Ascending aorta (tissue), 2 donors: ENCODE measurements at regions of chr11 and their contacts with region 1.

Region 1: GRCh38 chr11:124673333-124674167 is at the starts of genes SIAE and SPA17:
- DNase-seq: peak; percentile 79 to 97
- H3K4me3 ChIP-seq: peak within 1 kb of the TSS; percentile 65 to 87
- H3K27ac ChIP-seq: peak within 1 kb of the TSS; percentile 85 to 86
- H3K4me1 ChIP-seq: peaks cover 4 to 25% of the 10 kb centered on the region in 2 donors
- H3K27me3 ChIP-seq: no peaks in the 10 kb centered on the region
- CTCF ChIP-seq: no peak
- total RNA-seq, gene SIAE: 4.8 TPM
- total RNA-seq, gene SPA17: not detected

Region 2: GRCh38 chr11:124518989-124519451 is 154.5 kb before region 1 on chr11:
- intact Hi-C with region 1: no loop called
- DNase-seq: no peak
- H3K4me3 ChIP-seq: no peak overlapping the region
- H3K27ac ChIP-seq: no peak overlapping the region
- H3K4me1 ChIP-seq: no peaks in the 10 kb centered on the region
- H3K27me3 ChIP-seq: no peaks in the 10 kb centered on the region
- CTCF ChIP-seq: no peak

Region 3: GRCh38 chr11:124622531-124623451 is 50.8 kb before region 1 on chr11 and contains the start of gene TBRG1:
- intact Hi-C with region 1: loop called (anchors 2 kb)
- DNase-seq: peak; percentile 41 to 95
- H3K4me3 ChIP-seq: peak within 1 kb of the TSS; percentile 82 to 94
- H3K27ac ChIP-seq: peak within 1 kb of the TSS; percentile 92 to 98
- H3K4me1 ChIP-seq: peaks cover 0 to 3% of the 10 kb centered on the region in 2 donors
- H3K27me3 ChIP-seq: no peaks in the 10 kb centered on the region
- CTCF ChIP-seq: no peak
- total RNA-seq, gene TBRG1: 21.2 TPM

Region 4: GRCh38 chr11:124717786-124718651 is 44.5 kb after region 1 on chr11:
- intact Hi-C with region 1: loop called (anchors 5 kb)
- DNase-seq: no peak
- H3K4me3 ChIP-seq: peak overlapping the region; percentile 48 to 64
- H3K27ac ChIP-seq: peak overlapping the region; percentile 51 to 65
- H3K4me1 ChIP-seq: peaks cover 0 to 8% of the 10 kb centered on the region in 2 donors
- H3K27me3 ChIP-seq: no peaks in the 10 kb centered on the region
- CTCF ChIP-seq: no peak

Region 5: DNA sequence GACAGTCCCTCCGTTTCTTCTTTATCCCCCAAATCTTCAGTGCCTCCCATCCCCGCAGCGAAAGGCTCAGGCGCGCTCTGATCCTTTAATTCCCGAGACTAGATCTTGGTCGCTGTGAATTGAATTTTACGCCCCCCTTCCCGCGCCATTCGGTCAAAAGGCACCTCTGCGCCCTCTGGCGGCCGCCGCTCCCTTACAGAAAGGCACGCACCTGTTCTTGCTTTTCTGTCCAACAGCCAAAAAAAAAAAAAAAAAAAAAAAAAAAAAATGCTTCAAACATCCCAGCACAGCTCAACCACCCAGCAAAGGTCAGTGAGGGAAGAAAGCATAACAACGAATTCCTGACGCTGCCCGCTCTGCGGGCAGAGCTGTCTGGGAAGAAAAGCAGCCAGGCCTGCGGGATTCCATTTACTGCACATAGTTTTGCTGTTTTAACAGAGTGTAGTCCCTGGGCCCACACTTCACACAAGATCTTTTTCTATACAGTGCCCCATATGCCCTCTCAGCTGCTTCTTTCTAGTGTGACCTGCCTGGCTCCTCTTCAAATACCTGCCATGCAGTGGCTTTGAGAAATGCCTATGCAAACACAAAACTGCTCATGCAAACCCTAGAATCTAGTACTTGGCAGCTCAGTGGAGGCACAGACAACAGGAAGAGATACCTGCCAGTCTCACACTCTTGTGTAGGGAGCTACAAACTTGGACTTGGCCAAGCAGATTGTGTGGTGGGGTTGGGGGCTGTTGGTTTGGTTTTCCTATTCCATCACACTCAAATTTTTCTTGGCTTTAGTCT is 89.8 kb after region 1 on chr11:
- intact Hi-C with region 1: loop called (anchors 1 kb)
- DNase-seq: peak in 1 of 2 donors; percentile 92
- H3K4me3 ChIP-seq: peak overlapping the region; percentile 62 to 67
- H3K27ac ChIP-seq: peak overlapping the region; percentile 79 to 85
- H3K4me1 ChIP-seq: peaks cover 3 to 21% of the 10 kb centered on the region in 2 donors
- H3K27me3 ChIP-seq: no peaks in the 10 kb centered on the region
- CTCF ChIP-seq: peak; percentile 26 to 75 (median 68)

Region 6: GRCh38 chr11:124837491-124837856 is 163.9 kb after region 1 on chr11:
- intact Hi-C with region 1: loop called (anchors 1 kb)
- DNase-seq: no peak
- H3K4me3 ChIP-seq: no peak overlapping the region
- H3K27ac ChIP-seq: peak overlapping the region in 1 of 2 donors; percentile 84
- H3K4me1 ChIP-seq: peaks cover 11 to 14% of the 10 kb centered on the region in 2 donors
- H3K27me3 ChIP-seq: peaks cover 21% of the 10 kb centered on the region
- CTCF ChIP-seq: peak in 2 of 3 experiments; percentile 25 to 35

Region 7: DNA sequence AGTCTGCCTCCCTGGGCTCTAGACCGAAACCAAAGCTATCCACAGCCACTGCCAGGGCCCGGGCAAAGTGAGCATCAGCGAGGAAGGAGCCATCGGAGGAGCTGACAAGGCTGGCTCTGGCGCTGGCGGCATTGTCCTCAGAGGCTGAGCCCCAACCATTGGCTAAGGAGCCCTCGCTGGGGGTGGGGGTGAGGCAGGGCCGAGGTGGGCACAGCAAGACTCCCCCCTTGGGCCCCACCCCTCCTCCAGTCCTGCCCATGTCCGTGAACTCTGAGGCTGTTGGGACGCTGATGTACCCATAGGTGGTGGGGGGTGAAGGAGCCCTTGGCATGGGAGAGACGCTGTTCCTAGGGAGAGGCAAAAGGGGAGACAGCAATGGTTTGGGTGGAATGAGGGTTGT is 212.9 kb after region 1 on chr11:
- intact Hi-C with region 1: no loop called
- DNase-seq: peak in 1 of 2 donors; percentile 58
- H3K4me3 ChIP-seq: no peak overlapping the region
- H3K27ac ChIP-seq: no peak overlapping the region
- H3K4me1 ChIP-seq: no peaks in the 10 kb centered on the region
- H3K27me3 ChIP-seq: no peaks in the 10 kb centered on the region
- CTCF ChIP-seq: no peak